ENCODE measurements at regions of chr5 and their contacts with region 1.

Region 1: GRCh38 chr5:115377468-115378217 is 81.2 kb upstream of the CCDC112 start:
- DNase-seq: no peak
- ATAC-seq: peak; percentile 70

Region 2: GRCh38 chr5:114634967-114635901 is 742.4 kb before region 1 on chr5:
- intact Hi-C with region 1: no loop called
- DNase-seq: no peak
- ATAC-seq: no peak

Region 3: DNA sequence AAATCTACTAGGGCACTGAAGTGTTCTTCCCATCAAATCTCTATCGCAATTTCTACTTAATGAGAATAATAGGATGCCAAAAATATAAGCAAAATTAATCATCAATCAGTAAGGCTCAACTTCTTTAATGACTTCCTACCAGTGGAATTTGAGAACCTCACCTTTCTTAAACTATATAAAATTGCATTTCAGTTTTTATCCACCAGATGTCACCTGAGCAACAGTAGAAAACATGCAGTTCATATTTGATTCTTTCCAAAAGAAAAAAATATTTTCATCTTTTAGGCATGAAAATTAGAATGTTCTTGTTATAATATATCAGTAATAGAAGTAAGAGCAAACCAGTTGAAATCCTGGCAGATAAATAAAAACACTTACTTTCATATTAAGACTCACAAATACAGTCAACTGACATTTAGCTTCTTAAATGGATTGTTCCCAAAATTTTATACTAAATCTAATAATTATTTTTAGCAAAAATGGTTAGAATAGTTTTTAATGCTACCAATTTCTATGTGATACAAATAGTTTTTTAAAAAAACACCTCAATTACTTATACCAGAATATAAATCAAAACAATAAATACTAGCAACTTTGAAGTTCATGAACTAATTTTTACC is 67.8 kb before region 1 on chr5:
- intact Hi-C with region 1: loop called (anchors 10 kb)
- DNase-seq: no peak
- ATAC-seq: peak; percentile 38

Region 4: DNA sequence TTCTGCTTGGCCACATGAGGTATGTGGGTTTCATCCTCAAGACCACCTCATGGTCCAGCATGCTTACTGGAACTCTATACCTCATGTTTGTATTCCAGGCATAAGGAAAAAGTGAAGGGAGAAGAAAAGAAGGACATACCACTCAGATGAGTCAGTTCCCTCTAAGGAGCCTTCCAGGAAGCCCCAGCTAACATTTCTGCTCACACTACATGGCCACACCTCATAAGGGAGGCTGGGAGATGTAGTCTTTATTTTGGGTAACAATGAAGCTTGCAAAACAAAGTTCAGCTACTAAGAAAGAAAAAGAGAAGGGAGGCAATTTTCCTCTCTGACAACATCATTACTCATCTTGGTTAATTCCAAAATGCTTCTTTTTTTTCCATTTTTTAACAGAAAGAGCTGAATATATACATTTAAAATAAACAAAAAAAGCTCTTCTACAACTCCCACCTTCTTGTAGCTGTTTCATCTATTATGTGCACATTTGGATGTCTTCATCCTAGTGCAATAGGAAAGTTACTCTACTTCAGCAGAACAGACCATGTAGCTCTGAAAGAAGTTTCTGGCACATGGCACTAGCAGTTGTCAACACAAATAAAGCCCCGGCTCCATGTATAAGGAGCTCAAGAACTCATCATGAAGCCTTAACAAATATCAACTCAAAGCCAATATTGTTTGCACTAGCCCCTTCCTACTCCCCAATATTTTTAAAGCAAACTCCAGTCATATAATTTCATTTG is 42.4 kb after region 1 on chr5:
- intact Hi-C with region 1: loop called (anchors 5 kb)
- DNase-seq: no peak
- ATAC-seq: no peak

Region 5: DNA sequence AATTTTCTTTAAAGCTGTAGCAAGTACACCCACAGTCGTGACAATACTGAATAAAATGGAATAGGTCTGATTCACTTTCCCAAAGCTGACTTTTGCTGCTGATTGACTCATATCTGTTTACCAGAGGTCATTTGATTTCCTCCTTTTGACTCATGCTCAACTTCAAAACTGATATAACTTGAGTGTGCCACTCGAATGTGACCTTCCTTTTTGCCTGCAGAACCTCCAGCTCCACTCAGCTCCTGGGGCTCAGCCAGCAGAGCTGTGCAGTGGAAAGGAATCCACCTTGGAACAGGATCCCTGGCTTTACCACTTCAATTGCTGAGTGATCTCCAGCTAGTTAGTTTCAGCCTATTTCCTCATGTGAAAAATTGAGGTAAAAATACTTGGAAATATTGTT is 82.8 kb after region 1 on chr5:
- intact Hi-C with region 1: loop called (anchors 2 kb)
- DNase-seq: peak; percentile 89
- ATAC-seq: peak; percentile 91

Region 6: GRCh38 chr5:115571441-115571878 is 193.8 kb after region 1 on chr5:
- intact Hi-C with region 1: loop called (anchors 5 kb)
- DNase-seq: no peak
- ATAC-seq: peak; percentile 80